ENCODE measurements at regions of chr4 and their contacts with region 1.

Region 1: DNA sequence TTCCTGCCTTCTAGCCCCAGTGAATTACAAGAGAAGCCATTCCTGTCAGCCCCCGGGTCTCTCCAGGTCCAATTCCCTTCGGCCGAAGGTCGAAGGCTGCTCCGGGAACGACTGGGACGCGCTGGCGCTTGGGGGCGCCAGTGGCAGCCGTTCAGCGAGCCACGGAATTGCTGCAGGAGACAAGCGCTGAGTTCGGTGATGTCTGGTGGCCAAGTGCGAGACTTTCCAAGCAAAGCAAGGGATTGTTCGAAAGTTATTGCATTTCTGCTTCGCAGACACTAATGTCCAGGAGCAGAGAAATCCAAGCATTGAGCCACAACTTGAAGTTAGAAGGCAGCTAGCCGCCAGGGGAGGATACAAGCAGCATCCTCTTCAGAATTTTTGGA is 1.1 kb upstream of the DKK2 start:
- DNase-seq: peak; percentile 4
- H3K4me3 ChIP-seq: no peak overlapping the region
- H3K27ac ChIP-seq: no peak overlapping the region
- H3K4me1 ChIP-seq: no peaks in the 10 kb centered on the region
- H3K27me3 ChIP-seq: peaks cover 5% of the 10 kb centered on the region
- CTCF ChIP-seq: no peak
- POLR2A ChIP-seq: no peak

Region 2: DNA sequence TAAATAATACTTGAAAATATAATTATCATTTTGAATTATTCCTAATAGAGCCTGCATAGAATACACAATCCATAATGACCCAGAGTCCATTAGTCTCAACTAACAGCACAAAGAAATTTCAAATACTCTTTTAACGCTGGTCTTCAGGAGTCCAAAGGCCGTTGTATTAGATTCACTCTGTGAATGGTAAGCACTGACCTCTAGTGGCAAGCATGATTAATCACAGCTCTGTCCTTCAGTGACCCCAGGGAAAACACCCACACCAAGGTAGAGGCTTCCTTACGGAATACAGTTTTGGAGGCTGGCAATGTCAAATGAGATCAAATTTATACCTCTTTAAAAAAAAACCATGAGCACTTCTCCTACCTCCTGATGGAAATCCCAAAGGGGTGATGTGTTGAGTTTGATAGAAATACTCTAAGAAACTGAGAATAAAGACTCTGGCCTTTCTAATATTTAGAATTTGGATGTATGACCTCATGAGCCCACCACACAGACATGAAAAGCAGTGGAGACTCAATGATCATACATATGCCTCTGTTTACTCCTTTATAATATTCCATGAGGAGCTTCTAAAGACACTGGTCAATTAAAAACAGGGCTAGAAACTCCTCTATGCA is 146.1 kb after region 1 on chr4:
- intact Hi-C with region 1: loop called (anchors 10 kb)
- DNase-seq: peak; percentile 6
- H3K4me3 ChIP-seq: no peak overlapping the region
- H3K27ac ChIP-seq: no peak overlapping the region
- H3K4me1 ChIP-seq: no peaks in the 10 kb centered on the region
- H3K27me3 ChIP-seq: no peaks in the 10 kb centered on the region
- CTCF ChIP-seq: peak in 3 of 4 experiments; percentile 48 to 67 (median 63)
- POLR2A ChIP-seq: no peak